Right lobe of liver (tissue), 6 donors: ENCODE measurements at regions of chr11 and their contacts with region 1.

Region 1: GRCh38 chr11:65180877-65181568 is 705 bp upstream of the CAPN1 start:
- DNase-seq: peak in 2 of 3 donors; percentile 67
- ATAC-seq: peak; percentile 66 to 73 (median 71)
- H3K4me3 ChIP-seq: peak overlapping the region; percentile 60 to 94 (median 88)
- H3K27ac ChIP-seq: peak overlapping the region; percentile 63 to 87 (median 81)
- H3K4me1 ChIP-seq: peaks cover 0 to 4% (median 0%) of the 10 kb centered on the region in 4 donors
- H3K27me3 ChIP-seq: no peaks in the 10 kb centered on the region
- CTCF ChIP-seq: peak; percentile 37 to 65 (median 59)
- POLR2A ChIP-seq: peak; percentile 56

Region 2: GRCh38 chr11:65121865-65122581 is 59.0 kb before region 1 on chr11 and contains the starts of genes FAU and MRPL49:
- intact Hi-C with region 1: loop called (anchors 5 to 10 kb)
- DNase-seq: peak; percentile 99 to 100 (median 100)
- ATAC-seq: peak; percentile 79 to 87 (median 80)
- H3K4me3 ChIP-seq: peak within 1 kb of the TSS; percentile 81 to 97 (median 86)
- H3K27ac ChIP-seq: peak within 1 kb of the TSS; percentile 63 to 92 (median 84)
- H3K4me1 ChIP-seq: peaks cover 0 to 15% (median 4%) of the 10 kb centered on the region in 4 donors
- H3K27me3 ChIP-seq: no peaks in the 10 kb centered on the region
- CTCF ChIP-seq: no peak
- POLR2A ChIP-seq: peak; percentile 92
- total RNA-seq, gene FAU: 287 to 472 (median 343) TPM
- total RNA-seq, gene MRPL49: 26.3 to 51.7 (median 28.4) TPM

Region 3: GRCh38 chr11:65432686-65433582 is 251.9 kb after region 1 on chr11:
- intact Hi-C with region 1: no loop called
- DNase-seq: no peak
- ATAC-seq: no peak
- H3K4me3 ChIP-seq: no peak overlapping the region
- H3K27ac ChIP-seq: peak overlapping the region; percentile 29 to 100 (median 71)
- H3K4me1 ChIP-seq: peaks cover 0 to 34% (median 11%) of the 10 kb centered on the region in 4 donors
- H3K27me3 ChIP-seq: no peaks in the 10 kb centered on the region
- CTCF ChIP-seq: peak; percentile 18 to 23 (median 19)
- POLR2A ChIP-seq: peak; percentile 51